Activated B cell treated with CpG ODN at 0.5 μM for 24 hours (primary cell): ENCODE measurements at regions of chr10 and their contacts with region 1.

Region 1: DNA sequence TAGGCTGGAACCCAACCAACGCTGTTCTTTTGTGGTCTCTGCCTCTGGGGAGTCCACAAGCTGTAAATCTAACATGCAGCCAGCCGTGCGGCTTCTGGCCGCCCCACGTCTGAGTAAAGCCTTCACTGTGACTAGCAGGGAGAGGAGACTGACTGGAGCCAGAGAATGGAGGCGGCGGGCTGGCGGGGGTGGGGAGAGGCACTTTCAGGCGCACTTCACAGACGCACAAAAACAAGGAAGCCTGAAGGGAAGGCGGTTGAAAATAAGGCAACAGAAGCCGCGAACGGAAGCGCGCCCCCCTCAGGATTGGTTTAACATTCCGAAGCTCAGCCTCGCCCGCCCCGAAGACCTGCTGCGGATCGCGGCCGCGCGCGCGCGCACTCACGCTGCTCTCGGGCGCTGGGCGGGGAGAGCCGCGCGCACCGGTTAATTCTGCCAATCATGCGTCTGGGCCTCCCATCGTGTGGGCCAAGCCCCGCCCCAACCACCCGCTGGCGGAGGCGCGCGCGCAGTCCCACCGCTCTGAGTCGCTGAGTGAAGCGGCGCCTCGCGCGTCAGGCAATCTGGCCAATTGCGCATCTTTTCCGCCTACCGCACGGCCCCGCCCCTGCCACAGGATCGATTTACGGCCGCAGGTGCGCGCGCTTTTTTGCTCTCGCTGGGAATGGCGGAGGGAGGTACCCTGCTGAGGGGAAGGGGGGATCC is at the start of gene SFR1:
- DNase-seq: peak; percentile 97
- ATAC-seq: peak; percentile 89
- H3K4me3 Mint-ChIP-seq: peak within 1 kb of the TSS; percentile 92
- H3K27ac Mint-ChIP-seq: peak within 1 kb of the TSS; percentile 99
- H3K4me1 Mint-ChIP-seq: peaks cover 25% of the 10 kb centered on the region
- H3K27me3 Mint-ChIP-seq: no peaks in the 10 kb centered on the region
- CTCF ChIP-seq: no peak
- total RNA-seq, gene SFR1: 12.3 TPM in 2 replicates

Region 2: DNA sequence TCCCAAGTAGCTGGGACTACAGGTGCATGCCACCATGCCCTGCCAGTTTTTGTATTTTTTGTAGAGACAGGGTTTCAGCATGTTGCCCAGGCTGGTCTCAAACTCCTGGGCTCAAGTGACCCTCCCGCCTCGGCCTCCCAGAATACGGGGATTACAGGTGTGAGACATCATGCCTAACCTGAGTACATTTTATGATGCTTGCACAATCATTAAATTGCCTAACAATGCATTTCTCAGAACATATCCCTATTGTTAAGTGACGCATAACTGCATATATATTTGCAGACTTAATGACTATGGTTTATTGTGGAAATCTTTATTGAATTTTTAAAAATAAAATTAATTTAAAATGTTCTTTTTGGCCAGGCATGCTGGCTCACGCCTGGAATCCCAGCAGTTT is 814.1 kb before region 1 on chr10:
- CTCF ChIA-PET with region 1: no interaction called
- POLR2A ChIA-PET with region 1: no interaction called
- intact Hi-C with region 1: no loop called
- DNase-seq: no peak
- ATAC-seq: no peak
- H3K4me3 Mint-ChIP-seq: no peak overlapping the region
- H3K27ac Mint-ChIP-seq: no peak overlapping the region
- H3K4me1 Mint-ChIP-seq: no peaks in the 10 kb centered on the region
- H3K27me3 Mint-ChIP-seq: no peaks in the 10 kb centered on the region
- CTCF ChIP-seq: no peak

Region 3: DNA sequence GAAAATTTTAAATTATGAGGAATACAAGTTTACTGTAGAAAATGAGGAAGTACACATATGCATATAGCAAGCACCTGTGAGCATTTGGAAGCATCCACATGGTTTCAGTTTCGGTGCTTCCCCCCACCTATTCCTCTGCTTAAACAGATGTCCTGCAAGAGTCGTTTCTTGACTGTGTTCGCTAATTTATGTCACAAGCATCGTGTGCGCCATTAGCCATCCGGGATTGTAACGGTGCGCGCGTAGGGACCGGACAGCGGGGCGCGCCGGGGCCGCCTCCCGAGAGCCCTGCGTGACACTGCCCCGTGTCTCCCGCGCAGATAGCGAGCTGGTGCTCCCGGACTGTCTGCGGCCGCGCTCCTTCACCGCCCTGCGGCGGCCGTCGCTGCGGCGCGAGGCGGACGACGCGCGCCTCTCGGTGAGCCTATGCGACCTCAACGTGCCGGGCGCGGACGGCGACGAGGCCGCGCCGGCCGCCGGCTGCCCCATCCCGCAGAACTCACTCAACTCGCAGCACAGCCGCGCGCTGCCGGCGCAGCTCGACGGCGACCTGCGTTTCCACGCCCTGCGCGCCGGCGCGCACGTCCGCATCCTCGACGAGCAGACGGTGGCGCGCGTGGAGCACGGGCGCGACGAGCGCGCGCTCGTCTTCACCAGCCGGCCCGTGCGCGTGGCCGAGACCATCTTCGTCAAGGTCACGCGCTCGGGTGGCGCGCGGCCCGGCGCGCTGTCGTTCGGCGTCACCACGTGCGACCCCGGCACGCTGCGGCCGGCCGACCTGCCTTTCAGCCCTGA is 537.3 kb before region 1 on chr10:
- CTCF ChIA-PET with region 1: no interaction called
- POLR2A ChIA-PET with region 1: interaction called, 5 read pairs
- intact Hi-C with region 1: loop called (anchors 1 kb)
- DNase-seq: peak; percentile 47
- ATAC-seq: peak; percentile 78
- H3K4me3 Mint-ChIP-seq: peak overlapping the region; percentile 82
- H3K27ac Mint-ChIP-seq: peak overlapping the region; percentile 79
- H3K4me1 Mint-ChIP-seq: peaks cover 12% of the 10 kb centered on the region
- H3K27me3 Mint-ChIP-seq: no peaks in the 10 kb centered on the region
- CTCF ChIP-seq: no peak

Region 4: DNA sequence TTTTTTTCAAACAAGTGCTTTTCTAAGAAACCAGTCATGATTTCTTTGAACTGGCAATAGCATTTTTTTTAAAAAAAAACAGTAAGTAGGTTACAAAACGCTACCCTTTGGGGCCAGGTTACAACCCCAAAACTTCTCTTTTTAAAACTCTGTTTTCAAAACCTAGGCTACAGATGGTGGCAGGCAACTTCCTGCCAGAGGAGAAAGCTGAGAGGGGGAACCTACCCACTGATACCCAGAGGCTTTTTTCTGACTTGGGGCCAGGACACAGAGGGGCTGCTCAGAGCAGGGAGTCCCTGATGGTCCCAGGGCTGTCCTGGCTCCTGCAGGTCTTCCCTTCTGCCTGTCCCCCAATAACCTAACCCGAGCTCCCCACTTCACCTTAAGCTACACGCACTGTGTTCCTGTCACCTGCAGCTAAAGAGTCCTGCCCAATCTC is 210.6 kb before region 1 on chr10:
- CTCF ChIA-PET with region 1: interaction called, 3 read pairs
- POLR2A ChIA-PET with region 1: interaction called, 28 read pairs
- intact Hi-C with region 1: no loop called
- DNase-seq: no peak
- ATAC-seq: peak; percentile 42
- H3K4me3 Mint-ChIP-seq: no peak overlapping the region
- H3K27ac Mint-ChIP-seq: peak overlapping the region; percentile 86
- H3K4me1 Mint-ChIP-seq: peaks cover 53% of the 10 kb centered on the region
- H3K27me3 Mint-ChIP-seq: no peaks in the 10 kb centered on the region
- CTCF ChIP-seq: no peak

Region 5: GRCh38 chr10:103966671-103967447 is 154.8 kb before region 1 on chr10 and contains the start of gene SLK:
- CTCF ChIA-PET with region 1: interaction called, 3 read pairs
- POLR2A ChIA-PET with region 1: interaction called, 28 read pairs
- intact Hi-C with region 1: loop called (anchors 1 kb)
- DNase-seq: peak; percentile 89
- ATAC-seq: peak; percentile 87
- H3K4me3 Mint-ChIP-seq: peak within 1 kb of the TSS; percentile 95
- H3K27ac Mint-ChIP-seq: peak within 1 kb of the TSS; percentile 92
- H3K4me1 Mint-ChIP-seq: peaks cover 42% of the 10 kb centered on the region
- H3K27me3 Mint-ChIP-seq: no peaks in the 10 kb centered on the region
- CTCF ChIP-seq: no peak
- total RNA-seq, gene SLK: 12.8 and 14.0 TPM in 2 replicates

Region 6: DNA sequence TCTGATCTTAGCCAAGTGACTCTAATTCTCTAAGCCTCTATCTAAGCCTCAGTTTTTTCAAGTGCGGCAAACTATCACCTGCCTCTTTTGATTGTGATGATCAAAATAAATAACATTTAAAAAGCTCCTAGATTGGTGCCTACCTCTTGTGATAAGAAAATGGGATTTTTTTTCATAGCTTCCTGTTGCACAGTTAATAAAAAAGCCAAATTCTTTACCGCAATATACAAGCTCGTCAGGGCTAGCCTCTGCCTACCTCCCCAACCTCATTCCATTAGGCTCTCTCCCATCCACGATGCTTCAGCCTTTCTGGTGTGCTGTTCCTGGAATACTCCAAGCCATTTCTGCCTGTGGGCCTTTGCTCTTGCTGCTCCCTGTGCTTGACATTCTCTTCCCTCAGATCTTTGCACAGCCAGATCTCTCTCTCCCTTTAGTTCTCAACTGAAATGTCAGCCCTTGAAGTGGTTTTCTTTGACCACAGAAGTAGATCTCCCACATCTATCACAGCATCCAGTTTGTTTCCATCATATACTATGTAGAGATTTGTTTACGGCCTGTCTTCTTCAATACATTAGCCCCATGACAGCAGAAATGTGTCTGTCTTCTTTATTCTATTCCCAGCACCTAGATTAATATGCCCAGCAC is 49.1 kb after region 1 on chr10:
- CTCF ChIA-PET with region 1: no interaction called
- POLR2A ChIA-PET with region 1: no interaction called
- intact Hi-C with region 1: no loop called
- DNase-seq: no peak
- ATAC-seq: no peak
- H3K4me3 Mint-ChIP-seq: no peak overlapping the region
- H3K27ac Mint-ChIP-seq: no peak overlapping the region
- H3K4me1 Mint-ChIP-seq: no peaks in the 10 kb centered on the region
- H3K27me3 Mint-ChIP-seq: peaks cover 22% of the 10 kb centered on the region
- CTCF ChIP-seq: no peak

Region 7: DNA sequence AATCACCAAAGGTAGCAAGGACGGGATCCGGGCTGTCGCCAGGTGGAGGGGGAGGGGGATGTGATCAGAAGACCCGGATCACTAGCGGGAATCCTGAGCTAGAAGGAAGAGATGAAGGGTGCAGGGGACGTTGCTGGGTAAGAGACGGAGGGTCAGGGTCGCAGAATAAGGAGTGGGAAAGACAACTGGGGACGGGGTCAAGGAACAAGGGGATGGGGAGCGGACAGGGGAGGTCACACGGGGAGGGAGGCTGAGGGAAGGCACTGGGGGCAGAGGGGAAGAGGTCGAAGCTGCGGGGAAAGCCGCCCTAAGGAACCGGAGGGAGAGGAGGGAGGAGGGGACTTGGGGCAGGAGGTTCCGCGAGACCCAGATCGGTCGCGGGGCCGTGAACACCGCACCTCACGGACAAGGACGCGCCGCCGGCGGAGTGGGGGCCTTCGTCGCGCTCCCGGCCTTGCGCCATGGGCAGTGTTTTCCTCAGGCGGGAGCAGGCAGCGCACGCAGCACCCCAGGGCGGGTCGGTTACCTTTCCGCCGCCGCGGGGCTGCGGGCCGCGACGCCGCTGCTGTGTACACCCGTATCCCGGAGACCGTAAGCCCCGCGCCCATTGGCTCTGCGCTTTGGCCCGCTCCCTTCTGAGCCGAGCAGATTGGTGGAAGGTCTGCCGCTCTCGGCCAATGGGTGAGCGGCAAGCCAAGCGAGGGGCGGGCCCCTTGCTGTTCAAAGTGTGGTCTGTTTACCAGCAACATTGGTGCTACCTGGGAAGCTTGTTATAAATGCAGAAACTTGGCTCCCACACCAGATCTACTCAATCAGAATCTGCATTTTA is 110.3 kb after region 1 on chr10 and contains the start of gene CFAP43:
- CTCF ChIA-PET with region 1: no interaction called
- POLR2A ChIA-PET with region 1: no interaction called
- intact Hi-C with region 1: loop called (anchors 1 kb)
- DNase-seq: peak; percentile 96
- ATAC-seq: peak; percentile 100
- H3K4me3 Mint-ChIP-seq: peak within 1 kb of the TSS; percentile 83
- H3K27ac Mint-ChIP-seq: peak within 1 kb of the TSS; percentile 41
- H3K4me1 Mint-ChIP-seq: peaks cover 12% of the 10 kb centered on the region
- H3K27me3 Mint-ChIP-seq: peaks cover 16% of the 10 kb centered on the region
- CTCF ChIP-seq: no peak
- total RNA-seq, gene CFAP43: 0.22 TPM in 1 of 2 replicates, not detected in the other

Region 8: DNA sequence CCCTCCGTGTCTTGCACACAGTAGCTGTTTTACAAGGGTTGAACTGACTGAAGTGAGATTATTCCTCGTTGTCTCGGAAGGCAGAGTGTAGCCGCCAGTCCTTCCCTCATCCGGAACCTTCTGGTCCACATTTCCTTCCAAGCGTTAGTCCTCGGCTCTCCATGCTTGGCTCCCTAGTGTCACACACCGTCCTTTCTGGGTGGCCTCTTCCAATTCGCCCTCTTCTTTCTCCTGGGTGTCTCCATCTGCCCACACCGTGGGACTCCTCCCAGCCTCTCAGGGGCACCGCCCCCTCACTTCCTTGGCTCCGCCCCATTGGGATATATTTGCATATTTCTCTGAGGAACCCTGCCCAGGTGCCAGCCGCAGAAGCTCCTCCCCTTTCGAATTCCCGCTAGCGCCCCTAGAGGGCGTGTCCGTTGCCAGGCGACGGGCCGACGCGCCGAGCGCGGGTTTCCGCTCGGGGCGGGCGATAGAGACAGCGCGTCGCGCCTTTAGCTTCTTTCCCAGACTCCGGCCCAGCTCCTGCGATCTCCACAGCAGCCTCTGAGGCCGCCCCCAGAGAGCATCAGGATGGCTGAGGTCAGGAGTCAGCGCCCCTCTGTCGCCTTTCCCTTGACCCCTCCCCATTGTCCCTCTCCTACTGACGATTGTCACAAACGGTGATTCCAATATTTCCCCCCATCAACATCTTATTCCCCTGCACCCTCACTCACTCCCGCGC is 231.8 kb after region 1 on chr10 and contains the start of gene CFAP58:
- CTCF ChIA-PET with region 1: interaction called, 4 read pairs
- POLR2A ChIA-PET with region 1: interaction called, 5 read pairs
- intact Hi-C with region 1: loop called (anchors 2 kb)
- DNase-seq: peak; percentile 83
- ATAC-seq: peak; percentile 77
- H3K4me3 Mint-ChIP-seq: no peak within 1 kb of the TSS
- H3K27ac Mint-ChIP-seq: peak within 1 kb of the TSS; percentile 57
- H3K4me1 Mint-ChIP-seq: peaks cover 11% of the 10 kb centered on the region
- H3K27me3 Mint-ChIP-seq: no peaks in the 10 kb centered on the region
- CTCF ChIP-seq: no peak
- total RNA-seq, gene CFAP58: not detected in 2 replicates

Region 9: GRCh38 chr10:104938031-104938430 is 816.4 kb after region 1 on chr10:
- CTCF ChIA-PET with region 1: no interaction called
- POLR2A ChIA-PET with region 1: no interaction called
- intact Hi-C with region 1: no loop called
- DNase-seq: no peak
- ATAC-seq: no peak
- H3K4me3 Mint-ChIP-seq: no peak overlapping the region
- H3K27ac Mint-ChIP-seq: no peak overlapping the region
- H3K4me1 Mint-ChIP-seq: no peaks in the 10 kb centered on the region
- H3K27me3 Mint-ChIP-seq: peaks cover 3% of the 10 kb centered on the region
- CTCF ChIP-seq: no peak